Naive thymus-derived CD4-positive, alpha-beta T cell (primary cell): ENCODE measurements at regions of chr17 and their contacts with region 1.

Region 1: DNA sequence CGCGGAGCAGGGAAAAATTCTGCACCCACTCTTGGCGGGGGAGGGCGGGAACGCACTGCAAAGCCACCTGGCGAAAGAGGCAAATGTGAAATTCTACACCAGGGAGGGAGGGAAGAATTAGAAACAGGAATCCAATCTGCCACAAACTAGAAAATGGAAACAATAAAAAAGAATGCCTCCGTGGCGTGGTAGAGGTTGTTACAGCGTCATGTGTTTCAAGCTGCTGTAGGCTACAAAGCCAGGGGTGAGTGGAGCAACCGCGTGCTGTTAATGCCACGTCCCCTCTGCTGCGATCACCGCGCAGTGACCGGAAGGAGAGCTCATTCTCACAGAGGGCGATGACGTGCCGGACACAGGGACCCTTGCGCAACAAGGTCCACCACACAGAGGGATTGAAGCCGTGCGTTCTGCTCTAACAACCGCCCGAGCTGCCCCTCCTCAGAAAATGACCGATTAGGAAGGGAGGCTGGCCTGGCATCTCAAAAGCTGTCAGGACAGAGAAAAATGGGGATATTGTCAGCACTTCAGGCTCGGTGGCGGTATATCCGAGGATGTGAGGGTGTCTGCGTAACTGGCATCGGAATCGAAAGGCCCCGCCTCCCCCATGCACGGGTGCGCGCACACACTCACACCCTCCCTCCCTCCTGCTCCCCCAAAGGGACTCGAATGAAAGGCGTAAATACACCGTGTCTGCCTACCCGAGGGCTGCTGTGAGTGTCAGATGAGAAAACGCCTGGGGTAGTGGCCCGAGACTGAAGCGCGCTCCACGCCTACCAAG is 70.8 kb upstream of the TNRC6C start:
- DNase-seq: peak; percentile 55 to 92 (median 84)
- ATAC-seq: peak; percentile 95
- H3K4me3 ChIP-seq: peak overlapping the region; percentile 80
- H3K4me3 Mint-ChIP-seq: peak overlapping the region; percentile 84 to 97 (median 92)
- H3K27ac ChIP-seq: peak overlapping the region; percentile 92
- H3K27ac Mint-ChIP-seq: peak overlapping the region; percentile 65 to 99 (median 98)
- H3K4me1 ChIP-seq: peaks cover 31 to 37% of the 10 kb centered on the region in 2 donors
- H3K4me1 Mint-ChIP-seq: peaks cover 20 to 62% (median 52%) of the 10 kb centered on the region in 7 donors
- H3K27me3 ChIP-seq: no peaks in the 10 kb centered on the region
- H3K27me3 Mint-ChIP-seq: peaks cover 0 to 58% (median 0%) of the 10 kb centered on the region in 5 donors

Region 2: GRCh38 chr17:77609553-77610517 is 277.8 kb before region 1 on chr17:
- CTCF ChIA-PET with region 1: no interaction called
- POLR2A ChIA-PET with region 1: interaction called, 3 read pairs
- intact Hi-C with region 1: loop called in 1 of 2 experiments (anchors 1 kb)
- DNase-seq: peak in 8 of 9 donors; percentile 30 to 86 (median 81)
- ATAC-seq: peak; percentile 95
- H3K4me3 ChIP-seq: peak overlapping the region; percentile 54
- H3K4me3 Mint-ChIP-seq: peak overlapping the region; percentile 75 to 92 (median 84)
- H3K27ac ChIP-seq: peak overlapping the region; percentile 77
- H3K27ac Mint-ChIP-seq: peak overlapping the region; percentile 87 to 98 (median 92)
- H3K4me1 ChIP-seq: peaks cover 11 to 21% of the 10 kb centered on the region in 2 donors
- H3K4me1 Mint-ChIP-seq: peaks cover 21 to 35% (median 31%) of the 10 kb centered on the region in 7 donors
- H3K27me3 ChIP-seq: no peaks in the 10 kb centered on the region
- H3K27me3 Mint-ChIP-seq: peaks cover 0 to 9% (median 0%) of the 10 kb centered on the region in 5 donors

Region 3: DNA sequence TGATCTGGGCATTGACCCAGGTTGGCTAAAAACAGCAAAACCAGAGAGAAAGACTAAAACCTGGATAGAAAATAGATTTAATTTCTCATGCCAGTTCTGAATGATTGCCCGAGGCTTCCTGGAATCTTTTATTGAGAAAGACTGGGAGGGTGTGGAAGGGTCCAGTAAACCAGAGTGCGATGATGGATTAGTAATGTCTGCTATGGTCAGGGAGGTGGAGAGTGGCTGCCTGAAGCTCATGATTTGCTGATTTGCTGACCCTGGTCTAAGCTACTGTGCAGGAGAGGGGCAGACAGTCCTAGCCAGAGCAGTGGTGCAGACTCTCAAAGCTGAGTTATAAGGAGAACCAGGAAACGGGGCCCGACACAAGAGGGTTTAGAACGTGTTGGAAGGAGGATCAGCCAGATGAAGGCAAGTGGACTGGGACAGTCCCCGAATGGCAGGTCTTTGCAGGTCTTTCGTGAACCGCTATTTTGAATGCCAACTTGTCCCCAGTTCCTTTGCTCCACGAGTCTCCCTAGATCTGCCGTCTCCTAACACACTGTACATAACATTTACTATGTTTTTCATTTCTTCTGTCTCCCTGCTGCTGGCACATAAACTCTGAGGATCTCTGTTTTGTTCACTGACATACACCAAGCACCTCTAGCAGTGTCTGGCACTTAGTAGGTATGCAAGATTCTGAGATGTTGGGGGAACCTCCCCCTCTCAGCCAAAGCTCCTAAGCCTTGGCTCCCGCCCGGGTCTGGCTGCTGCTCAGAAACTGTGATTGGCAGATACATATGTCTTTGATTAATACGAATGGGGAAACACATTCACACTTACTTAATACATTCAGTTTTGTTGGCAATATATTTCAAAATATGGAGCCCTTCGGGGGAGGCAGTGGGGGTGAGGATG is 166.5 kb before region 1 on chr17:
- CTCF ChIA-PET with region 1: no interaction called
- POLR2A ChIA-PET with region 1: no interaction called
- intact Hi-C with region 1: no loop called
- DNase-seq: no peak
- ATAC-seq: no peak
- H3K4me3 ChIP-seq: no peak overlapping the region
- H3K4me3 Mint-ChIP-seq: no peak overlapping the region
- H3K27ac ChIP-seq: no peak overlapping the region
- H3K27ac Mint-ChIP-seq: no peak overlapping the region
- H3K4me1 ChIP-seq: no peaks in the 10 kb centered on the region
- H3K4me1 Mint-ChIP-seq: peaks cover 0 to 8% (median 0%) of the 10 kb centered on the region in 7 donors
- H3K27me3 ChIP-seq: no peaks in the 10 kb centered on the region
- H3K27me3 Mint-ChIP-seq: peaks cover 0 to 10% (median 0%) of the 10 kb centered on the region in 5 donors

Region 4: DNA sequence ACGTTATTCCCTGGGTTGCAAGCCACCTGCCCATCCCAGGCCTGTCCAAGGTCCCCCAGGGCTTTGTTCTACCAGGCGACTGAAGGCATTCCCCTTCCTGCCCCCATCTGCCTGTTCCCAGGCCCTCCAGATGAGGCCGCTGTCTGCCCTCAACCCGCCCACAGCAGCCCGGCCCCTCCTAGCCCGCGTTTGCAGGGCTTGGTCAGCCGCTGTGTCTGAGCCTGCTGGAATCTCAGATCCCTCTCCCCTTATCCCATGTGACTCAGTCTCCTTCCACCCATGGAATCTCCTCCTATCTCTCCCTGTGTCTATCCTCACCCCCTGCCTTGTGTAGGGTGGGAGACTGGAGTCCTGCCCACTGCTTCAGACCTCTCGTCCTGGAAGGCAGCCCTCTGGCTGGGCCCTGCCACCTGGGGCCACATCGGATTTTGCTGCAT is 115.2 kb before region 1 on chr17:
- CTCF ChIA-PET with region 1: no interaction called
- POLR2A ChIA-PET with region 1: interaction called, 5 read pairs
- intact Hi-C with region 1: loop called (anchors 2 to 5 kb)
- DNase-seq: peak; percentile 41 to 69 (median 57)
- ATAC-seq: peak; percentile 93
- H3K4me3 ChIP-seq: no peak overlapping the region
- H3K4me3 Mint-ChIP-seq: peak overlapping the region in 1 of 10 donors; percentile 8
- H3K27ac ChIP-seq: no peak overlapping the region
- H3K27ac Mint-ChIP-seq: peak overlapping the region in 5 of 9 donors; percentile 12 to 78 (median 74)
- H3K4me1 ChIP-seq: peaks cover 7 to 9% of the 10 kb centered on the region in 2 donors
- H3K4me1 Mint-ChIP-seq: peaks cover 12 to 15% (median 13%) of the 10 kb centered on the region in 7 donors
- H3K27me3 ChIP-seq: no peaks in the 10 kb centered on the region
- H3K27me3 Mint-ChIP-seq: peaks cover 0 to 17% (median 0%) of the 10 kb centered on the region in 5 donors

Region 5: GRCh38 chr17:77832180-77832560 is 55.5 kb before region 1 on chr17:
- CTCF ChIA-PET with region 1: no interaction called
- POLR2A ChIA-PET with region 1: no interaction called
- intact Hi-C with region 1: no loop called
- DNase-seq: no peak
- ATAC-seq: no peak
- H3K4me3 ChIP-seq: no peak overlapping the region
- H3K4me3 Mint-ChIP-seq: no peak overlapping the region
- H3K27ac ChIP-seq: no peak overlapping the region
- H3K27ac Mint-ChIP-seq: peak overlapping the region in 1 of 9 donors; percentile 70
- H3K4me1 ChIP-seq: peaks cover 9 to 10% of the 10 kb centered on the region in 2 donors
- H3K4me1 Mint-ChIP-seq: peaks cover 14 to 53% (median 32%) of the 10 kb centered on the region in 7 donors
- H3K27me3 ChIP-seq: no peaks in the 10 kb centered on the region
- H3K27me3 Mint-ChIP-seq: peaks cover 0 to 26% (median 0%) of the 10 kb centered on the region in 5 donors

Region 6: GRCh38 chr17:77842528-77843147 is 45.0 kb before region 1 on chr17:
- CTCF ChIA-PET with region 1: no interaction called
- POLR2A ChIA-PET with region 1: interaction called, 13 read pairs
- intact Hi-C with region 1: loop called in 1 of 2 experiments (anchors 1 kb)
- DNase-seq: no peak
- ATAC-seq: peak; percentile 52
- H3K4me3 ChIP-seq: no peak overlapping the region
- H3K4me3 Mint-ChIP-seq: peak overlapping the region in 6 of 10 donors; percentile 0 to 63 (median 44)
- H3K27ac ChIP-seq: no peak overlapping the region
- H3K27ac Mint-ChIP-seq: peak overlapping the region in 6 of 9 donors; percentile 0 to 90 (median 10)
- H3K4me1 ChIP-seq: peaks cover 38 to 44% of the 10 kb centered on the region in 2 donors
- H3K4me1 Mint-ChIP-seq: peaks cover 28 to 61% (median 51%) of the 10 kb centered on the region in 7 donors
- H3K27me3 ChIP-seq: no peaks in the 10 kb centered on the region
- H3K27me3 Mint-ChIP-seq: peaks cover 0 to 2% (median 0%) of the 10 kb centered on the region in 5 donors

Region 7: GRCh38 chr17:77875881-77876509 is 11.7 kb before region 1 on chr17:
- CTCF ChIA-PET with region 1: interaction called, 4 read pairs
- POLR2A ChIA-PET with region 1: interaction called, 17 read pairs
- intact Hi-C with region 1: loop called in 1 of 2 experiments (anchors 1 kb)
- DNase-seq: no peak
- ATAC-seq: peak; percentile 85
- H3K4me3 ChIP-seq: no peak overlapping the region
- H3K4me3 Mint-ChIP-seq: peak overlapping the region in 7 of 10 donors; percentile 47 to 78 (median 48)
- H3K27ac ChIP-seq: no peak overlapping the region
- H3K27ac Mint-ChIP-seq: peak overlapping the region; percentile 14 to 89 (median 72)
- H3K4me1 ChIP-seq: peaks cover 38 to 95% of the 10 kb centered on the region in 2 donors
- H3K4me1 Mint-ChIP-seq: peaks cover 42 to 100% (median 89%) of the 10 kb centered on the region in 7 donors
- H3K27me3 ChIP-seq: no peaks in the 10 kb centered on the region
- H3K27me3 Mint-ChIP-seq: peaks cover 0 to 17% (median 0%) of the 10 kb centered on the region in 5 donors

Region 8: DNA sequence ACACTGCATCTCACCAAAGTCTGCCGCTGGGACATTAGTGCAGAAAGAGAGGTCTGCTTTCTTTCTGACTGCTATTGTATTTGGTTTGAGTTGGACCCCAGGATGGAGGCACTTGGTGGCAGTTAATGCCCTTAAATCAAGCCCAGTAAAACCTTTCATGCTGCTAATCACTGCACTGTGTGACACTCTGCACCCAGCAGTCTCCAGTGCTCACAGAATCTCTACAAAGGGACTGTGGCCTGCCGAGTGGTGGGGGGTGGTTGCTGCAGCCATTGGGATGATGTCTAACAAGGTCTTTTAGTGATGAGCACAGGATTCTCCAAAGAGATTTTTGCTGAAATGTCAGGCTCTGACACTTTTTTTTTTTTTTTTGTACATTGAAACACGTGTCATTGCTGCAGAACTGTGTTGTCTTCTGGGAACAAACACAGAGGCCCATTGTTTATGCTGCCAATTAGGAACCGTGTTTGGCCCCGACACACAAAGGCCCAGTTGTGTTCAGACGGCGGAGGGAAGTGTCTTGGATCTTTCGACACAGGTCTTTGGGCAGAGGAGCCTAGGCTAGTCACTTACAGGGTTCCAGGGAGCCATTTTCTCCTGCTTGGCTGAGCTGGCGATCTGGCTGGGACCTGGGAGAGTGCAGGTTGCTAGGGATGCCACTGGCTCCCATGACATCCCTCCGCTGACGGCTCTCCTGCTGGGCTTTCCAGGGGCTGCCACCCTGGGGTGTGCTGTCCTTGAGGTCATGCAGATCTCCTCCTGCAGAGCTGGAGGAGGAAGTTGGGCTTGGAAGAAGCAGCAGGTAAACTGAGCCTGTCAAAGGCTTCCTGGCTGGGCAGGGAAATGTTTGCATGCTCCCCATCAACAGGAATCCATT is 54.7 kb after region 1 on chr17:
- CTCF ChIA-PET with region 1: no interaction called
- POLR2A ChIA-PET with region 1: no interaction called
- intact Hi-C with region 1: no loop called
- DNase-seq: no peak
- ATAC-seq: no peak
- H3K4me3 ChIP-seq: no peak overlapping the region
- H3K4me3 Mint-ChIP-seq: no peak overlapping the region
- H3K27ac ChIP-seq: no peak overlapping the region
- H3K27ac Mint-ChIP-seq: peak overlapping the region in 1 of 9 donors; percentile 3
- H3K4me1 ChIP-seq: no peaks in the 10 kb centered on the region
- H3K4me1 Mint-ChIP-seq: peaks cover 0 to 4% (median 0%) of the 10 kb centered on the region in 7 donors
- H3K27me3 ChIP-seq: no peaks in the 10 kb centered on the region
- H3K27me3 Mint-ChIP-seq: peaks cover 0 to 34% (median 3%) of the 10 kb centered on the region in 5 donors